CD4-positive, alpha-beta T cell (primary cell): ENCODE measurements at regions of chr3 and their contacts with region 1.

Region 1: DNA sequence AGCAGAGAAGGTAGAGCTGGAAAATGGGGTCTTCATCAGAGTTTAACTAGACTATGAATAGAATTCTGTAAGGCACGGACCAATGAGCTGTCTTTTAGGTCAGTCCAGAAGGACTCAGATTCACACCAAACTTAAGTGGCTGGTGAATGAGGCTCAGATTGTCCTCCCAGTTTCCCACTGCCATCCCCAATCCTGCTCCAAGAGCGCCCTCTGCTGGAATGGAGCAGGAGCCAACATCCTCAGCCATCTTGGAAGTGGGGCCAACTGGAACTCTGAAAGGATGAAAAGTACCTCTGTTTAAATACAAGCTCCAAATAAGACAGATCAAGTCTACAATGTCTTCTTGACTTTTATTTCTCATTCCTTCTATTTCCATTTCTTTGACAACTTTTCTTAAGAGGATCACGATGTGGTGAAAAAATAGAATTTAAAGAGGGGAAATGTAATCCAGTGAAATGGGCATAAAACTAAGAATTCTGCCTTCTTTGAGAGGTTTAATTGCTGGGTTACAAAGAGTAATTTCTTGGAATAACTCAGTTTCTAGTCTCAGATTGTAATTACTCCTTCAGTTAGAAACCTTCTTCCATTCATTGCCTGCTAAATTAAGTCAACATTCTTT is 217.1 kb upstream of the TPRG1 start:
- DNase-seq: peak; percentile 51 to 85 (median 64)
- ATAC-seq: peak; percentile 78
- H3K4me3 ChIP-seq: no peak overlapping the region
- H3K4me3 Mint-ChIP-seq: no peak overlapping the region
- H3K27ac ChIP-seq: no peak overlapping the region
- H3K27ac Mint-ChIP-seq: no peak overlapping the region
- H3K4me1 ChIP-seq: peaks cover 2% of the 10 kb centered on the region
- H3K4me1 Mint-ChIP-seq: no peaks in the 10 kb centered on the region
- H3K27me3 ChIP-seq: no peaks in the 10 kb centered on the region
- H3K27me3 Mint-ChIP-seq: peaks cover 9% of the 10 kb centered on the region
- CTCF ChIP-seq: peak; percentile 80

Region 2: DNA sequence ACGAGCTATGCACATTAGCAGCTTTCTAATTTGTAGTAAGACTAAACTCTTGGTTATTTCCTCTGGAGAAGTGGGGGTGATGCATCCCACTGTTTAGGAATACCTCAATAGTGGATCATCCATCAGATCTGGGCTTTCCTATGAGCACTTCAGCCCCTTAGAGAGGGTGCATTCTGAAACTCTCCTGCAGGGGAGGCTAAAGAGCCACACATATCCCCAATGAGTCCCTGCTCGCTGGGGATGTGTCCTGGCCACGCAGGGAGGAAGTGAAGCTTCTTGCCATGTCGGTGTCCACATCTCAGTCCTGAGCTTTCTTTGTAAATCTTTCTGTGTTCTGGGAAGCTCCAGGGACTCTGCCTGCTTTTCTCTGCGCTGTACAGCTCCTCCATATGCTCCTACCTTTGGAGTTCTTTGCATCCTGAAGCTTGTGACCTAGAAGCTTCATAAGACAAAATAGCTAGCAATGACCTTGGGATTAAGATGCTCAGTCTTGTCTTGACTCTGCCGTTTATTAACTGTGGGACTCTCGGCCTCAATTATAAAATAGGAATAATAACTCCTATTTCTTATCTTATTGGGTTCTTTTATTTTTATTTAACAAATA is 1634.9 kb before region 1 on chr3:
- CTCF ChIA-PET with region 1: no interaction called
- POLR2A ChIA-PET with region 1: no interaction called
- intact Hi-C with region 1: loop called in 1 of 2 experiments (anchors 10 kb)
- DNase-seq: peak; percentile 16 to 71 (median 38)
- ATAC-seq: peak; percentile 77
- H3K4me3 ChIP-seq: no peak overlapping the region
- H3K4me3 Mint-ChIP-seq: no peak overlapping the region
- H3K27ac ChIP-seq: no peak overlapping the region
- H3K27ac Mint-ChIP-seq: no peak overlapping the region
- H3K4me1 ChIP-seq: peaks cover 14% of the 10 kb centered on the region
- H3K4me1 Mint-ChIP-seq: peaks cover 15% of the 10 kb centered on the region
- H3K27me3 ChIP-seq: peaks cover 13 to 15% of the 10 kb centered on the region in 2 experiments
- H3K27me3 Mint-ChIP-seq: peaks cover 63% of the 10 kb centered on the region
- CTCF ChIP-seq: no peak

Region 3: GRCh38 chr3:187616307-187616972 is 1338.3 kb before region 1 on chr3:
- CTCF ChIA-PET with region 1: no interaction called
- POLR2A ChIA-PET with region 1: no interaction called
- intact Hi-C with region 1: loop called in 1 of 2 experiments (anchors 10 kb)
- DNase-seq: peak; percentile 8 to 70 (median 32)
- ATAC-seq: peak; percentile 52
- H3K4me3 ChIP-seq: no peak overlapping the region
- H3K4me3 Mint-ChIP-seq: no peak overlapping the region
- H3K27ac ChIP-seq: no peak overlapping the region
- H3K27ac Mint-ChIP-seq: no peak overlapping the region
- H3K4me1 ChIP-seq: no peaks in the 10 kb centered on the region
- H3K4me1 Mint-ChIP-seq: no peaks in the 10 kb centered on the region
- H3K27me3 ChIP-seq: no peaks in the 10 kb centered on the region
- H3K27me3 Mint-ChIP-seq: peaks cover 5% of the 10 kb centered on the region
- CTCF ChIP-seq: peak; percentile 76

Region 4: GRCh38 chr3:188749010-188749617 is 205.6 kb before region 1 on chr3:
- CTCF ChIA-PET with region 1: interaction called, 4 read pairs
- POLR2A ChIA-PET with region 1: no interaction called
- intact Hi-C with region 1: loop called in 1 of 2 experiments (anchors 2 kb)
- DNase-seq: peak; percentile 10 to 79 (median 44)
- ATAC-seq: peak; percentile 80
- H3K4me3 ChIP-seq: no peak overlapping the region
- H3K4me3 Mint-ChIP-seq: no peak overlapping the region
- H3K27ac ChIP-seq: no peak overlapping the region
- H3K27ac Mint-ChIP-seq: no peak overlapping the region
- H3K4me1 ChIP-seq: no peaks in the 10 kb centered on the region
- H3K4me1 Mint-ChIP-seq: peaks cover 5% of the 10 kb centered on the region
- H3K27me3 ChIP-seq: no peaks in the 10 kb centered on the region
- H3K27me3 Mint-ChIP-seq: no peaks in the 10 kb centered on the region
- CTCF ChIP-seq: peak; percentile 71